Left ventricle myocardium inferior (tissue), 1 donor: ENCODE measurements at regions of chr10 and their contacts with region 1.

Region 1: GRCh38 chr10:69392481-69393000 is 24.2 kb downstream of the TACR2 start:
- DNase-seq: peak; percentile 86
- H3K4me3 ChIP-seq: no peak overlapping the region
- H3K27ac ChIP-seq: peak overlapping the region; percentile 45
- H3K4me1 ChIP-seq: peaks cover 40% of the 10 kb centered on the region
- H3K27me3 ChIP-seq: no peaks in the 10 kb centered on the region
- CTCF ChIP-seq: peak; percentile 98

Region 2: DNA sequence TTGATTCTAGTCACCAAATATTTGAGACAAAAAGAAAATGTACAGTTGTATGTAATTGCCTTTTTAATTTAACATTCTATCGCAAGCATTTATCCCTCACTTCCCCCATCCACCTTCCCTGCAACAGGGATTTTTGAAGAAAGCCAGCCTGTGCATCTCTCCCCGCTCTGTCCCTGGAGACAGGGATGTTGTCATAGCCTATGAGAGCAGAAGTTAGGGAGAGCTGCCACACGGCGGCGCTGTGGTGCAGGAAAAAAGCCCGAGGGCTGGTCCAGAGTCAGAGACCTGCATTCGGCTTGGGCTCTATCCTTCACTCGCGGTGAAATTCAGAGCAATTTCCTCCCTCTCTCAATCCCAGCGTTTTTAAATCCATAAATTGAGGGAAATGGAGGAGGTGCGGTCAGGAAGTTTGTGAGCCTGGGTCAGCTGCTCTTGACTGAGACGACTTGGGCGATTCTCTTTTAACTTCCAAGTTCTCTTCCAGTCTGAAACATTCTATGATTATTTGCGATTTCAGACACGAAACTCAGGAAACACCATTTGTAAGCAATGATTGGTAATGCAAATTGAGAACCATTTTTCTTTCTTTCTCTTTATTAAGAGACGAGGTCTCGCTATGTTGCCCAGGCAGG is 154.9 kb before region 1 on chr10:
- intact Hi-C with region 1: loop called (anchors 2 kb)
- DNase-seq: peak; percentile 88
- H3K4me3 ChIP-seq: no peak overlapping the region
- H3K27ac ChIP-seq: no peak overlapping the region
- H3K4me1 ChIP-seq: peaks cover 4% of the 10 kb centered on the region
- H3K27me3 ChIP-seq: no peaks in the 10 kb centered on the region
- CTCF ChIP-seq: peak; percentile 89

Region 3: GRCh38 chr10:69451209-69451783 is 58.8 kb after region 1 on chr10 and contains the start of gene TSPAN15:
- intact Hi-C with region 1: no loop called
- DNase-seq: peak; percentile 92
- H3K4me3 ChIP-seq: peak within 1 kb of the TSS; percentile 86
- H3K27ac ChIP-seq: peak within 1 kb of the TSS; percentile 82
- H3K4me1 ChIP-seq: peaks cover 58% of the 10 kb centered on the region
- H3K27me3 ChIP-seq: no peaks in the 10 kb centered on the region
- CTCF ChIP-seq: no peak
- total RNA-seq, gene TSPAN15: 6.8 TPM